ENCODE measurements at regions of chr17 and their contacts with region 1.

Region 1: DNA sequence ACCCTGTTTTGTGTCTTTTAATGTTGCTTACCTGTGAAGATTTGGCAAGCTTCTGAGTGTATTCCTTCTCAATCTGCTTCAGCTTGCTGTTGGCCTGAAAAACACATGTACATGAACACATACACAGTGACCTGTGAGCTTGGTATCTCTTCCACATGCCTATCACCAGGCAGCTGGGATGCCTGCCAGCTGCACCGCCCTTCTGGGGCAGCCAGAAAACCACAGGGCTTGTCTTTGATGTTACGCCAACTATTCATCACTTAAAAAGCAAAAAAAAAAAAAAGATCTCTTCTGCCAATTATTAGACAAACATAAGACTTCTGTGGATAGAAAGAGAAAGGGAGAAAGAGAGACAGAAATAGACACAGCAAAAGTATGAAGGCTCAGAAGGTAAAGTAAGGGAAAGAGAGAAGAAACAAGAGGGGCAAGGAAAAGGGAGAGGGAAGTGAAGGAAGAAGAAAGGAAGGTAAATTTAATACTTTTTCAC is 189.2 kb upstream of the AXIN2 start:
- DNase-seq: peak; percentile 99
- ATAC-seq: peak; percentile 99
- H3K4me3 ChIP-seq: peak overlapping the region in 2 of 3 experiments; percentile 3 to 15; a peak in 1 of 6 replicates
- H3K27ac ChIP-seq: peak overlapping the region; percentile 49
- H3K4me1 ChIP-seq: peaks cover 44% of the 10 kb centered on the region
- H3K27me3 ChIP-seq: no peaks in the 10 kb centered on the region
- CTCF ChIP-seq: no peak
- EP300 ChIP-seq: peak in 1 of 2 experiments; percentile 92; a peak in 2 of 4 replicates
- POLR2A ChIP-seq: no peak
- RAD21 ChIP-seq: no peak

Region 2: GRCh38 chr17:65472415-65473309 is 278.0 kb before region 1 on chr17:
- CTCF ChIA-PET with region 1: no interaction called
- POLR2A ChIA-PET with region 1: no interaction called
- in situ Hi-C with region 1: no loop called
- intact Hi-C with region 1: no loop called
- DNase-seq: no peak
- ATAC-seq: no peak
- H3K4me3 ChIP-seq: no peak overlapping the region
- H3K27ac ChIP-seq: no peak overlapping the region
- H3K4me1 ChIP-seq: no peaks in the 10 kb centered on the region
- H3K27me3 ChIP-seq: peaks cover 0 to 27% of the 10 kb centered on the region in 2 experiments; a peak in 3 of 5 replicates
- CTCF ChIP-seq: no peak
- EP300 ChIP-seq: no peak
- POLR2A ChIP-seq: no peak
- RAD21 ChIP-seq: no peak

Region 3: GRCh38 chr17:65698381-65699061 is 52.2 kb before region 1 on chr17:
- CTCF ChIA-PET with region 1: no interaction called
- POLR2A ChIA-PET with region 1: no interaction called
- in situ Hi-C with region 1: no loop called
- intact Hi-C with region 1: loop called (anchors 10 kb)
- DNase-seq: peak; percentile 71
- ATAC-seq: peak; percentile 35; the same call in 1 of the 3 replicates
- H3K4me3 ChIP-seq: peak overlapping the region in 1 of 3 experiments; percentile 6; a peak in 1 of 6 replicates
- H3K27ac ChIP-seq: peak overlapping the region; percentile 18
- H3K4me1 ChIP-seq: peaks cover 42% of the 10 kb centered on the region
- H3K27me3 ChIP-seq: no peaks in the 10 kb centered on the region
- CTCF ChIP-seq: no peak
- EP300 ChIP-seq: peak in 1 of 2 experiments; percentile 88; a peak in 2 of 4 replicates
- POLR2A ChIP-seq: no peak
- RAD21 ChIP-seq: no peak

Region 4: DNA sequence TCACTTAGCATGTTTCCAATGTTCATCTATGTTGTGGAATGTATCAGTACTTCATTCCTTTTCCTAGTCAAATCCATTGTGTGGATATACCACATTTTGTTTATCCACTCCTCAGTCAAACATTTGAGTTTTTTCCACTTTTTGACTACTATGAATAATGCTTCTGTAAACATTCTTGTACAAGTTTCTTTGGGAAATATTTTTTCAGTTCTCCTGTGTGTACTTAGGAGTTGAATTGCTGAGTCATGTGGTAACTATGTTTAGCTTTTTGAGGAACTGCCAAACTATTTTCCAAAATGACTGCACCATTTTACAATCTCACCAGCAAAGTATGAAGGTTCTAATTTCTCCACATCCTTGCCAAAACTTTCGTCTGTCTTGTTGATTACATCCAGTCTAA is 34.4 kb after region 1 on chr17:
- CTCF ChIA-PET with region 1: no interaction called
- POLR2A ChIA-PET with region 1: interaction called, 4 read pairs
- in situ Hi-C with region 1: no loop called
- intact Hi-C with region 1: loop called (anchors 2 kb)
- DNase-seq: peak; percentile 95
- ATAC-seq: peak; percentile 77
- H3K4me3 ChIP-seq: no peak overlapping the region; a peak in 1 of 6 replicates
- H3K27ac ChIP-seq: peak overlapping the region; percentile 48
- H3K4me1 ChIP-seq: peaks cover 43% of the 10 kb centered on the region
- H3K27me3 ChIP-seq: no peaks in the 10 kb centered on the region
- CTCF ChIP-seq: no peak
- EP300 ChIP-seq: peak in 1 of 2 experiments; percentile 94; a peak in 2 of 4 replicates
- POLR2A ChIP-seq: no peak
- RAD21 ChIP-seq: no peak

Measured in HepG2 (cell line).